Heart right ventricle (tissue), 16 donors: ENCODE measurements at regions of chr12 and their contacts with region 1.

Region 1: DNA sequence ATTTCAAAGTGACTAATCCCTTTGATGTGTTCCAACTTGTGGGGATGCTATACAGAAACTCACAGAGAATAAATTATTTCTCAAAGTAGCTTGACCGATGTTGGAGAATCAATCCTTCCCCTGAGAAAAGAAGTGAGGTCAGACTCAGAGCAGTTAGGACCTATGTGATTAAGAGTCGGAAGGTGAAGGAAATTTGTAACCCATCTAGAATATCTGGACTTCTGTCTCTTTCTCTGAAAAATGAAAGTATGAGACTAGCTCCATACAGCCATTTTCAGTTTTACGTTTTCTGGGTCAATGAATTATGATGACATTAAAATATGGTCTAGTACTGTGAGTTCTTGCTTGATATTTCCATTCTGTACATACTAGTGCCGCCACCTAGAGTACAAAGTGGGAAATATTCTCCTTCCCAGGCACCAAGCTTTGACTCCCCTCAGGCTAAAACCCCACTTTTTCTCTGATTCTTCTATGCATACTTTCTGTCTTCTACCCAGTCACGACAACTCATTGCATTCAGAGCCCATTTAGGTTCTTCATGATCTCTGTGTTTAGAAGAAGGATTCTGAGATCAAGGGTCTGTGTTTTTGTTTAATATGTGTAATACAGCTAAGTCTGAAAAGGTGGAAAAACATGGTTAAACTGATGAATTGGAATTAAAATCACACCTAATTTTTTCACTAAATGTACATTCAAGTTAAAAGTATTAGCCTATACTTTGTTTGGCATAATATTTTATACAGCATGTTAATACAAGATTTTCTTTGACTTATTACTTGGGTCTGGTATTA is 6.9 kb upstream of the NTS start:
- DNase-seq: peak in 1 of 2 donors; percentile 41
- ATAC-seq: peak in 7 of 8 donors; percentile 78 to 90 (median 83)
- H3K4me3 ChIP-seq: peak overlapping the region in 4 of 10 donors; percentile 5 to 28 (median 12)
- H3K27ac ChIP-seq: peak overlapping the region in 2 of 10 donors; percentile 20 to 50
- H3K4me1 ChIP-seq: peaks cover 0 to 7% (median 0%) of the 10 kb centered on the region in 9 donors
- H3K27me3 ChIP-seq: no peaks in the 10 kb centered on the region
- CTCF ChIP-seq: peak; percentile 66 to 89 (median 80)

Region 2: DNA sequence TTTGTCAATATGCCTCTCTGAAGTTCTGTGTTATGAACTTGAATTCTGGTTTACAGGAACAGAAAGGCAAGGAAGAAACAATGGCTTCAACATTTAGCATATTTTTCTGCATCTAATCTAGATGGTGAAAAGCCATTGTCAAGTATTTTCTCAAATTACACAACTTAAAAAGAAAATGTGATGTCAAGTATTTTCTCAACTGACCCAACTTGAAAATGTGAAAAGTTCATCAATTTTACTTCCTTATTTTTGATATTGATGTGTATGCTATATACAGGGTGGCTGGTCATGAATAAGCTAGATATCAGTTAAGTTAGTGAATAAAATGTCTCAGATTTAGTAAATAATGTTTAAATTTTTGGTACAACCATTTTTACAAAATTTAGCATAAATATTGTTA is 390.4 kb before region 1 on chr12:
- intact Hi-C with region 1: loop called in 6 of 10 experiments (anchors 2 to 10 kb)
- DNase-seq: no peak
- ATAC-seq: no peak
- H3K4me3 ChIP-seq: no peak overlapping the region
- H3K27ac ChIP-seq: no peak overlapping the region
- H3K4me1 ChIP-seq: no peaks in the 10 kb centered on the region
- H3K27me3 ChIP-seq: peaks cover 0 to 5% (median 0%) of the 10 kb centered on the region in 7 donors
- CTCF ChIP-seq: no peak

Region 3: DNA sequence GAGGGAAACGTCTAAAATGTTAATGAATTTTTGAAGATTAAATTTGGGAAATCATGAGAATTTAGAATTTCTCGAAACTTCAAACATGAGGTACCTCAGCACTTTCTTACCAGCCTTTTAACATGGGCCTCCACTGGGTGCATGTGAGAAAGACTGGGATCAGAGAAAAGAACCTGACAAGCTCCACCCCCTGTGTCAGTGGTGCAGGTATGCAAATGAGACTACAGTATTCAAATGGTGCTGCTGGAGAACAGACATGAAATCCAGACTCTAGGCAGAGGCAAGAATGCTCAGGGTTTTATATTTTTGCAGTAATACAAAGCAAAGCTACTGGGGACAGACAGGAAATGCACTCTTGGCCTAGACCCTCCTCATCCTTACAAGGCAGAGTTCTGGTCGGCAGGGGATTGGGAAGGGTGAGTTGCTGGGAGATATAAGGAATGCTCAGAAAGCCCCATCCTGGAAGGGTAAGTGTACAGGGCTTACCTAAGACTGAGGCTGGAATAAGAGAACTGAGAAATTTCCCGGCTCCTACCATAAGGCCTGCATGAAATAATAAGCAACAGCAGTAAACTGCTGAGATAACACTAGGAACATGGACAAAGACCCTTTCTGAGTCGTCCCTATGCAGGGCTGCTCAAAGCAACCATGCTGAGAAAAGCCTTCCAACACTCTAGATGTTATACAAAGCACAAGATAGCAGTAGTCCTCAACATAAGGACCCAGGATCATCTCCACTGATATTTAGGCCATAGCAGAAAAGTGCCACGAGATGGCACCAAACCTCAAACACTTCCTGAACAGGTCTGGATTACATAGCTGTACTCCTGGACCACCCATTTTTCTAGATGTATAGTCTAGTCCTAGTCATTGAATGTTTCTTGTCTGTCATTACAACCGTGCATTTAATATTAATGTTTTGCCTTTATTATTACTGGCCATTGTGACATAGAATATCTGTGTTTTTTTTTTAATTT is 291.8 kb before region 1 on chr12:
- intact Hi-C with region 1: loop called (anchors 1 to 5 kb)
- DNase-seq: peak in 1 of 2 donors; percentile 50
- ATAC-seq: peak; percentile 38 to 86 (median 75)
- H3K4me3 ChIP-seq: no peak overlapping the region
- H3K27ac ChIP-seq: no peak overlapping the region
- H3K4me1 ChIP-seq: peaks cover 0 to 7% (median 0%) of the 10 kb centered on the region in 9 donors
- H3K27me3 ChIP-seq: no peaks in the 10 kb centered on the region
- CTCF ChIP-seq: peak; percentile 46 to 88 (median 74)

Region 4: GRCh38 chr12:85725991-85726390 is 141.2 kb before region 1 on chr12:
- intact Hi-C with region 1: loop called in 3 of 10 experiments (anchors 10 kb)
- DNase-seq: no peak
- ATAC-seq: peak in 1 of 8 donors; percentile 24
- H3K4me3 ChIP-seq: no peak overlapping the region
- H3K27ac ChIP-seq: no peak overlapping the region
- H3K4me1 ChIP-seq: no peaks in the 10 kb centered on the region
- H3K27me3 ChIP-seq: no peaks in the 10 kb centered on the region
- CTCF ChIP-seq: peak in 1 of 9 donors; percentile 26

Region 5: GRCh38 chr12:85740186-85740585 is 127.0 kb before region 1 on chr12:
- intact Hi-C with region 1: no loop called
- DNase-seq: no peak
- ATAC-seq: no peak
- H3K4me3 ChIP-seq: no peak overlapping the region
- H3K27ac ChIP-seq: no peak overlapping the region
- H3K4me1 ChIP-seq: peaks cover 0 to 12% (median 0%) of the 10 kb centered on the region in 9 donors
- H3K27me3 ChIP-seq: no peaks in the 10 kb centered on the region
- CTCF ChIP-seq: no peak